CD4-positive, alpha-beta T cell (primary cell): ENCODE measurements at regions of chr9 and their contacts with region 1.

Region 1: GRCh38 chr9:123544007-123544827 is 188.2 kb downstream of the CRB2 start:
- DNase-seq: peak in 3 of 14 experiments; percentile 24 to 33 (median 33)
- ATAC-seq: no peak
- H3K4me3 ChIP-seq: no peak overlapping the region
- H3K4me3 Mint-ChIP-seq: no peak overlapping the region
- H3K27ac ChIP-seq: no peak overlapping the region
- H3K27ac Mint-ChIP-seq: no peak overlapping the region
- H3K4me1 ChIP-seq: no peaks in the 10 kb centered on the region
- H3K4me1 Mint-ChIP-seq: no peaks in the 10 kb centered on the region
- H3K27me3 ChIP-seq: no peaks in the 10 kb centered on the region
- H3K27me3 Mint-ChIP-seq: no peaks in the 10 kb centered on the region
- CTCF ChIP-seq: peak; percentile 61

Region 2: DNA sequence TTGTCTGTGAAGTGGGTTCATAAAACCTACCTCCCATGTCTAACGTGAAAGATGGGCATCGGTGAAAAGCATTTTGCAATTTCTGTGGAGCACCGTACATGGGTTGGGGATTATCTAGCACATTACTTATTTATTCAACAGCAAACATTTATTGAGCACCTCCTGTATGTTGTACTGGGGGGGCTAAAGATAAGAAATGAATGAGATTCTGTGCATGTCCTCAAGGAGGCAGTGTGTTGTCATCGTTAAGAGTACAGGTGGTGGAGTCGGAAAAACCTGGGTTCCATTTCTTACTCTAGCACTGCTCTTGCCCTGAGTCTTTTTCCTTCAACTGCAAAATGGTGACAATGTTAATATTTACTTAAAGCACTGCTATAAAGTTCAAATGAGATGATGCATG is 416.1 kb after region 1 on chr9:
- CTCF ChIA-PET with region 1: no interaction called
- POLR2A ChIA-PET with region 1: no interaction called
- intact Hi-C with region 1: loop called in 1 of 2 experiments (anchors 10 kb)
- DNase-seq: no peak
- ATAC-seq: no peak
- H3K4me3 ChIP-seq: no peak overlapping the region
- H3K4me3 Mint-ChIP-seq: no peak overlapping the region
- H3K27ac ChIP-seq: no peak overlapping the region
- H3K27ac Mint-ChIP-seq: no peak overlapping the region
- H3K4me1 ChIP-seq: no peaks in the 10 kb centered on the region
- H3K4me1 Mint-ChIP-seq: no peaks in the 10 kb centered on the region
- H3K27me3 ChIP-seq: peaks cover 13 to 16% of the 10 kb centered on the region in 2 experiments
- H3K27me3 Mint-ChIP-seq: peaks cover 46% of the 10 kb centered on the region
- CTCF ChIP-seq: no peak

Region 3: GRCh38 chr9:124040935-124041816 is 497.0 kb after region 1 on chr9:
- CTCF ChIA-PET with region 1: interaction called, 7 read pairs
- POLR2A ChIA-PET with region 1: no interaction called
- intact Hi-C with region 1: loop called (anchors 1 to 2 kb)
- DNase-seq: peak in 12 of 14 experiments; percentile 10 to 60 (median 20)
- ATAC-seq: peak; percentile 21
- H3K4me3 ChIP-seq: peak overlapping the region; percentile 12
- H3K4me3 Mint-ChIP-seq: no peak overlapping the region
- H3K27ac ChIP-seq: no peak overlapping the region
- H3K27ac Mint-ChIP-seq: no peak overlapping the region
- H3K4me1 ChIP-seq: peaks cover 5% of the 10 kb centered on the region
- H3K4me1 Mint-ChIP-seq: peaks cover 19% of the 10 kb centered on the region
- H3K27me3 ChIP-seq: peaks cover 50 to 77% of the 10 kb centered on the region in 2 experiments
- H3K27me3 Mint-ChIP-seq: peaks cover 80% of the 10 kb centered on the region
- CTCF ChIP-seq: peak; percentile 68

Region 4: DNA sequence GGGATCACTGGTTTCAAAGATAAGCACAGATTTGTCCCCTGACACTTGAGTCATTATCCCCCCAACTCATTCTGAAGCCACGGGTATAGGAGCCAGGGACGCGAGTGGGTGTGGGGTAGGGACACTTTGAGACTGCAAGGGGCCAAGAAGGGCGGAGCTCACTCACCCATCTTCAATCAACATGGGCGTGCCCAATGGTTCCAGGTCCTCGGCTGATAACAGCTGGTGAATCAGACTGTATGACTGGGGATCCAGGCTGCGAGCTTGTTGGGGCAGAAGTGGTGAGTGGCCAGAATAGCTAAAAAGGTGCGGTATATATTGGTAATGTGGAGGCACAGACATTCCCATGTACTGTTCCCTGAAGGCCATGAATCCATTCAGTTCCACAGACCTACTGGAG is 993.7 kb after region 1 on chr9:
- CTCF ChIA-PET with region 1: interaction called, 3 read pairs
- POLR2A ChIA-PET with region 1: no interaction called
- intact Hi-C with region 1: loop called in 1 of 2 experiments (anchors 5 kb)
- DNase-seq: no peak
- ATAC-seq: no peak
- H3K4me3 ChIP-seq: no peak overlapping the region
- H3K4me3 Mint-ChIP-seq: no peak overlapping the region
- H3K27ac ChIP-seq: no peak overlapping the region
- H3K27ac Mint-ChIP-seq: no peak overlapping the region
- H3K4me1 ChIP-seq: no peaks in the 10 kb centered on the region
- H3K4me1 Mint-ChIP-seq: no peaks in the 10 kb centered on the region
- H3K27me3 ChIP-seq: no peaks in the 10 kb centered on the region
- H3K27me3 Mint-ChIP-seq: peaks cover 4% of the 10 kb centered on the region
- CTCF ChIP-seq: no peak